ENCODE measurements at regions of chrX and their contacts with region 1.

Region 1: DNA sequence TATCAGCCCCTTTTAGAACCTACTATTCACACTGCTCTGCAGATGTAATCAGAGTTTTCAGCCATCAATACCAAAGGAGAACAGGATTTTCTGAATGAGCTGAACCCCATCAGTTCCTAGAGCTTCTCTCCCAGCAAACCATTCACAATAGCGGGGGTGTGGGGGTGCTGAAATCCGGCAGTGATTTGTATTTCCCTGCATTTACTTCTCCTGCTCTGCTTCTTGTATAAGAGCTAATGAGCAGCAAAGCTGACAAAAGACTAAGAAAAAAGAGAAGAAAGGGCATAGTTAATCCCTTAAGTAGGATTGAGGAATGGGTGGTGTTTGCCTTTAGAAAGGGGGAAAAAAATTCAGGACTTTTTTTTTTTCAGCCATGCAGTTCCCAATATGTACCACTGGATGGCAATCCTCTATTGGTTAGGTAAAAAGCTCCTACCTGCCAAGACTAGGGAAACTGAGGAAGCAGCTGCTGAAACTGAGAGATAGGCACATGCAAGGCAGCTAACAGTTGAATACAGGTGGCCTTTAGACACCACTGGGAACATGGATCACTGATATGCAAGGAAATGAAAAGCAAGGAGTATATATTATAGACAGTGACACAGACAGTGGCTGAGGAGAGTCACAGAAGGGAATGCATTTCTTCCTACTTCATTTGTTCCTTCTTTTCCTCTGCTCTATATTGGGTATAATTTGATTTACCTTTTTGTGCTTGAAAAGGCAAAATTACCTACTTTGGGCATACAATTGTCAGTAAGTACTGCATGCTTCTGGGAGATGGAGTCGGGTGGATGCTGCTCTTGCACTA is 217.9 kb downstream of the HS6ST2 start:
- DNase-seq: peak; percentile 14
- H3K4me3 ChIP-seq: no peak overlapping the region
- H3K27ac ChIP-seq: no peak overlapping the region
- H3K4me1 ChIP-seq: no peaks in the 10 kb centered on the region
- H3K27me3 ChIP-seq: no peaks in the 10 kb centered on the region
- CTCF ChIP-seq: peak; percentile 26 to 54
- POLR2A ChIP-seq: no peak

Region 2: GRCh38 chrX:132957211-132958090 is 216.9 kb after region 1 on chrX:
- CTCF ChIA-PET with region 1: no interaction called
- POLR2A ChIA-PET with region 1: no interaction called
- dilution Hi-C with region 1: no loop called
- intact Hi-C with region 1: loop called (anchors 1 kb)
- DNase-seq: peak; percentile 6
- H3K4me3 ChIP-seq: peak overlapping the region in 1 of 3 experiments; percentile 43
- H3K27ac ChIP-seq: no peak overlapping the region
- H3K4me1 ChIP-seq: peaks cover 9% of the 10 kb centered on the region
- H3K27me3 ChIP-seq: peaks cover 26 to 28% of the 10 kb centered on the region in 2 experiments
- CTCF ChIP-seq: no peak
- POLR2A ChIP-seq: no peak

Region 3: DNA sequence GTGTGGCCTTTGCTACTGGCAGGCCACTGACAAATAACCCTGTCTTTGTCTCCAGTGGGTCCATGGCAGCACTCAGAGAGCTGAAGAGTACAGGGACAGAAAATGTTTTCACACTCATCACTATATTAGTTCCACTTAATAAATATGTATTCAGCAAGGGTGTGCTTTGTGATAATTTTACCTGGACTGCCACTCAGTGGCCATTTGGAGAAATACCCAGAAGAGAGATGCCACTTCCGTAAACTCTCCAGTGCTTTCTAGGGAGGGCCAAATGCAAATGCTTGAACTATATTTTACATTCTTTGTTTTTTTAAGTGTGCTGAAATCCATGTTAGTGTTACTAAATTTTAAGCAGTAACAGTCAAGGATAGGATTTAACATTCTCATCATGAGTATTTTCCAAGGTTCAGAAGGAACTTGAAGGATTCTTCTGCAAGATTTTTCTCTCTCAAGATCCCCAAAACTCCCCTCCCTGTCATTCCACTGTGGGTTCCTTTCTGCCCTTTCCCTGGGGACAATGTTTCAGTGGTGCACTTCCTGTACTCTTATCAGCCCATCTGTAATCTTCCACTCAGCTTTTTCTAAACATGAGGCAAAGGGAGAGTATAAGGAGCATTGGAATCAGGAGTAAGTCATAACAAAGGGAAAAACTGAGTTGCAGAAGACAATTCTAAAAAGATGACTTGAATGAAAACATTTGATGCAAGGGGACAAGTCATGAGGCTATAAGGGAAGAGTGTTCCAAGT is 431.6 kb after region 1 on chrX:
- CTCF ChIA-PET with region 1: no interaction called
- POLR2A ChIA-PET with region 1: no interaction called
- dilution Hi-C with region 1: no loop called
- intact Hi-C with region 1: loop called (anchors 5 kb)
- DNase-seq: peak; percentile 1
- H3K4me3 ChIP-seq: no peak overlapping the region
- H3K27ac ChIP-seq: no peak overlapping the region
- H3K4me1 ChIP-seq: no peaks in the 10 kb centered on the region
- H3K27me3 ChIP-seq: no peaks in the 10 kb centered on the region
- CTCF ChIP-seq: peak in 1 of 2 donors; percentile 8
- POLR2A ChIP-seq: no peak